ENCODE measurements at regions of chr2 and their contacts with region 1.

Region 1: GRCh38 chr2:226118471-226119430 is 680.9 kb downstream of the IRS1 start:
- DNase-seq: peak; percentile 92
- ATAC-seq: peak; percentile 53
- H3K4me3 ChIP-seq: peak overlapping the region; percentile 41
- H3K27ac ChIP-seq: peak overlapping the region; percentile 99
- H3K4me1 ChIP-seq: peaks cover 60% of the 10 kb centered on the region
- H3K27me3 ChIP-seq: no peaks in the 10 kb centered on the region
- CTCF ChIP-seq: no peak

Region 2: DNA sequence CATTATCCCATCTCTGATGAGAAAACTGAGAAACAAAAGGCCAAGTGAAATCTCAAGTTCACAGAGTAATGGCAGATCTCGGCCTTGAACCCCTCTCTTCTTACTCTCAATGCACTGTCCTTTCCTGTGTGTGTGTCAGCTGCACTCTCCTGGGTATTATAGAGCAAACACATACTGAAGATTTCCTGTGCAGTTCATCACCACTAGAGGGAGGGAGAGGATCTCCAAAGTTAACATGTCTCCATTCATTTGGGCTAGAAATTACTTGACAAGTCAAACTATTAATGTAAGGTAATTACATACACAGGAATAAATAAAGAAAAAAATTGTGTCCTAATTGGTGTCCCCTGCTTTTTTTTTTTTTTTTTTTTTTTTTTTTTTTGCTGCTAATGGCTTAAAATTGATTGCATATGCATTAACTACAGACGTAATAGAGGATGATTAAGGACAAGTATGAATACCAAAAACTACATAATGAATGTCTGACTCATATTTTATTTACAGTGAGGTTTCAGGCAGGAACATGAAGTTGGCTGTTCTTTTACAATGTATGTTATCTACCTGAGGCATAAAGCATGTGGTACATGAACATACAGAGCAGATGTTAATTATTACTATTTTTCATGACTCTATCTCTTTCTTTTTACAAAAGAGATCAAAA is 450.0 kb before region 1 on chr2:
- CTCF ChIA-PET with region 1: interaction called, 5 read pairs
- POLR2A ChIA-PET with region 1: no interaction called
- intact Hi-C with region 1: loop called (anchors 2 kb)
- DNase-seq: peak; percentile 82
- ATAC-seq: peak; percentile 90
- H3K4me3 ChIP-seq: no peak overlapping the region
- H3K27ac ChIP-seq: peak overlapping the region; percentile 17; the same call in 1 of the 2 replicates
- H3K4me1 ChIP-seq: peaks cover 16% of the 10 kb centered on the region
- H3K27me3 ChIP-seq: no peaks in the 10 kb centered on the region
- CTCF ChIP-seq: peak; percentile 93

Region 3: GRCh38 chr2:226030788-226031646 is 87.7 kb before region 1 on chr2:
- CTCF ChIA-PET with region 1: no interaction called
- POLR2A ChIA-PET with region 1: interaction called, 4 read pairs
- intact Hi-C with region 1: loop called (anchors 1 kb)
- DNase-seq: peak; percentile 65
- ATAC-seq: peak; percentile 86
- H3K4me3 ChIP-seq: peak overlapping the region; percentile 73
- H3K27ac ChIP-seq: peak overlapping the region; percentile 64
- H3K4me1 ChIP-seq: peaks cover 12% of the 10 kb centered on the region
- H3K27me3 ChIP-seq: no peaks in the 10 kb centered on the region
- CTCF ChIP-seq: no peak

Region 4: DNA sequence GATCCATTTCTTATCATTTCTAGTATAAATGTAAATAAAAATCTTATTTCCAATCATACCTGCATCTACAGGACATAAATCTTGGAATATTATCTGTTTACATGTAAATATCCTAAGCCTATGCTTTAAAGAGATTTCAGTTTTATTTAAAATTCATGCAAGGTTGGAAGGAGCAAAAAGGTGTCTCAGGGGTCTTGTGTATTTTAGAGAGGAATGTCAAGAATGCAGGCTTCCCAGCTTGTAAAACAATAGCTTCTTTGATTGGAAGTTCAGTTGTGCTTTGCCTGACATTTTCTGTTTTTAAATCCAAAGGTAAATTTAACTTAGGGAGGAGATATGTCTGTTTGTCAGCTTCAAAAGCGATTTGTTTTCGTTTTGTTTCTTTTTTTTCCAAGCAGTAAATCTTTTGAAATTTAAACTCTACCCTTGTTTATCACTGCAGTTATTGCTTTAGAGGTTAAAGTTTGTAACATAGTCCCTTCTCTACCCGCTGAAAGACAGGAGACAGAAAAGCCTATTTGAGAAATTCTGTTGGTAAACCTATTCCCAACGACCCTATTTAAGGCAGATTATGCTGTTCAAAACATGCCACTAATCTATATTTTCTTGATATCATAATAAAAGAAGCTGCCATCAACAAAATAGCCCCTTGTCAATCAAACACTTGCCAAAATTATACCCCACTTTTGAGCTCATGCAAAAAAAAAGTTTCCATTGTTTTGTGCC is 41.2 kb after region 1 on chr2:
- CTCF ChIA-PET with region 1: no interaction called
- POLR2A ChIA-PET with region 1: no interaction called
- intact Hi-C with region 1: no loop called
- DNase-seq: peak; percentile 66
- ATAC-seq: peak; percentile 61
- H3K4me3 ChIP-seq: peak overlapping the region; percentile 43; the same call in 1 of the 2 replicates
- H3K27ac ChIP-seq: 0 out of 2 replicates have a peak overlapping the region, but pooled peaks have one; percentile 3
- H3K4me1 ChIP-seq: peaks cover 11% of the 10 kb centered on the region
- H3K27me3 ChIP-seq: no peaks in the 10 kb centered on the region
- CTCF ChIP-seq: no peak

Region 5: DNA sequence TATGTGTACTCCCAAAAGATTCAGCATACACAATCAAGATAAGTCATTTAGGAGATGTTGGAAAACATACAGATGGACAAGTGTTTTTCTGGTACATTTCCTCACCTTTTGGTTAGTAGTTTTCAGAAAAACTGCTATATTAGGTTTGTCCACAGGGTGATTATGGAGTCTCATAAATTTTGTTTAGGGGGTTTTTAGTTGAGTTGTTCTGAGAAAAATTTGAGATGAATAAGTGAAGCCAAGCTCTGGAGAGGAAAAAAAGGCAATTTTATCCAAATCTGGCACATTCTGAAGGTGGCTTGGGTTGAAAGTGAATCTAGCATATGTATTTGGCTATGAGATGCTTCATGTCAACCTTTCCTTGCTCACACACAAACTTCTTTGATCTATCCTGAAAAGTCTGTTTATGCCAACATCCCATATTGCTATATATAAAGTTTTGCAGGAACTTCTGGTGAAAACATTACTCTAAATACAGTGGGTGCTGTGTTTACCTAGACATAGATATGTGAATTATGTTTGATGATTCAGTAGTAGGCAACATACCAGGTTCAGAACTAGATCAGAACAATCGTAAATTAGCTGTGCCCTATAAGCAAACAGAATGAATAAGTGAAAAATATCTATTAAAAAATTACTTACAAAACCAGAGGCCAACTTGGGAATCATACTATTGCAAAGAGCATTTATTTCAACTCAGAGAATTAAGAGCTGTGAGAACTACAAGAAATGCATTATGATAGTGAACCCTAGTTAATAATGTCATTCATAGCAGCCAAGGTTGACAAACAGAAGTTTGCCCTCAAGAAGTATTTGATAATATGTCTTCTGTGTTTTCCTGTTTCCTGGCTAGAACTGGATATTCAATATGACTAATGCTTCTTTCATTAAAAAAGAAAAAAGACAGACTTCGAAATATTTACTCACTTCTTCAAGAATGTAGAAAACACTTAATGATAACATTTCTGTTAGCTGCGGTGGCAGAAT is 128.8 kb after region 1 on chr2:
- CTCF ChIA-PET with region 1: no interaction called
- POLR2A ChIA-PET with region 1: no interaction called
- intact Hi-C with region 1: loop called (anchors 1 kb)
- DNase-seq: peak; percentile 76
- ATAC-seq: peak; percentile 92
- H3K4me3 ChIP-seq: peak overlapping the region; percentile 33; the same call in 1 of the 2 replicates
- H3K27ac ChIP-seq: peak overlapping the region; percentile 78
- H3K4me1 ChIP-seq: peaks cover 27% of the 10 kb centered on the region
- H3K27me3 ChIP-seq: no peaks in the 10 kb centered on the region
- CTCF ChIP-seq: peak; percentile 29; the same call in 1 of the 2 replicates

Region 6: GRCh38 chr2:226583715-226584114 is 465.0 kb after region 1 on chr2:
- CTCF ChIA-PET with region 1: no interaction called
- POLR2A ChIA-PET with region 1: no interaction called
- intact Hi-C with region 1: loop called (anchors 5 kb)
- DNase-seq: peak; percentile 94
- ATAC-seq: peak; percentile 98
- H3K4me3 ChIP-seq: no peak overlapping the region
- H3K27ac ChIP-seq: peak overlapping the region; percentile 33; the same call in 1 of the 2 replicates
- H3K4me1 ChIP-seq: peaks cover 23% of the 10 kb centered on the region
- H3K27me3 ChIP-seq: no peaks in the 10 kb centered on the region
- CTCF ChIP-seq: no peak

Region 7: DNA sequence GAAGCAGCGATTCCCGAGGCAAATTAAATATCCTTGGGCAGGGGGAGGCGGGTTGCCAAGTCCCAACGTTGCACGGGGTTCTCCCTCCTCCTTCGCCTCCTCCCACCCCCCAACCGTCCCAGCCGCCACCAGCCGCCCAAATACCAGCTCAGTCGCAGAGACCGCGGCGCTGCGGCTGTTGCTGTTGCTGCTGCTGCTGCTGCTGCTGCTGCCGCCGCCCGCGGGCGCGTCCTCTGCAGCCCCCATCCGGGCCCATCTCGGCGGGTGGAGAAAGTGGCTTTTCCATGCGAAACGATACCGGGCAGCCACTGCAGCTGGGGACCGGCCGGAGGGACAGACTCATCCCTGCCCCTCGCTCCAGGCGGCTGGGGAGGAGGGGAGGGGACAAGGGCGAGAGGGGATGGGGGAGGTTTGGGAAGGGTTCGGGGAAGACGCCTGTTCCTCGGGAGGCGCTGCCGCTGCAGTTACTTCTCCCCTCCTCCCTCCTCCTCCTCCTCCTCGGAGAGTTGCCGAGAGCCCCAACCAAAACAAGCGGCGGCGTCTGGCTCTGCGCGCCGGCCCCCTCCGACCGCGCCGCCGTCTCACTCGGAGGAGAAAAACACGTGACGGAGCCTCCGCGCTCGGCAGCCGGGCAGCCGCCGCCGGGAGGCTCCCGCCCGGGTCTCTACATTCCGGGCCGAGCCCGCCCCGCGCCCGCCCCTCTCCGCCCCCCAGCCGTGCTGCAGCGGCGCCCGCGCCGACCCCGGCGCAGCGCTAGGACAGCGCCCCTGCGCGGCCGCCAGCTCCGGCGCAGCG is 680.6 kb after region 1 on chr2 and contains the start of gene IRS1:
- CTCF ChIA-PET with region 1: no interaction called
- POLR2A ChIA-PET with region 1: interaction called, 4 read pairs
- intact Hi-C with region 1: loop called (anchors 2 kb)
- DNase-seq: peak; percentile 75
- ATAC-seq: peak; percentile 13
- H3K4me3 ChIP-seq: peak within 1 kb of the TSS; percentile 88
- H3K27ac ChIP-seq: peak within 1 kb of the TSS; percentile 88
- H3K4me1 ChIP-seq: peaks cover 36% of the 10 kb centered on the region
- H3K27me3 ChIP-seq: no peaks in the 10 kb centered on the region
- CTCF ChIP-seq: no peak
- total RNA-seq, gene IRS1: 38.8 and 43.8 TPM in 2 replicates